Left cardiac atrium (tissue), 4 donors: ENCODE measurements at regions of chr20 and their contacts with region 1.

Region 1: DNA sequence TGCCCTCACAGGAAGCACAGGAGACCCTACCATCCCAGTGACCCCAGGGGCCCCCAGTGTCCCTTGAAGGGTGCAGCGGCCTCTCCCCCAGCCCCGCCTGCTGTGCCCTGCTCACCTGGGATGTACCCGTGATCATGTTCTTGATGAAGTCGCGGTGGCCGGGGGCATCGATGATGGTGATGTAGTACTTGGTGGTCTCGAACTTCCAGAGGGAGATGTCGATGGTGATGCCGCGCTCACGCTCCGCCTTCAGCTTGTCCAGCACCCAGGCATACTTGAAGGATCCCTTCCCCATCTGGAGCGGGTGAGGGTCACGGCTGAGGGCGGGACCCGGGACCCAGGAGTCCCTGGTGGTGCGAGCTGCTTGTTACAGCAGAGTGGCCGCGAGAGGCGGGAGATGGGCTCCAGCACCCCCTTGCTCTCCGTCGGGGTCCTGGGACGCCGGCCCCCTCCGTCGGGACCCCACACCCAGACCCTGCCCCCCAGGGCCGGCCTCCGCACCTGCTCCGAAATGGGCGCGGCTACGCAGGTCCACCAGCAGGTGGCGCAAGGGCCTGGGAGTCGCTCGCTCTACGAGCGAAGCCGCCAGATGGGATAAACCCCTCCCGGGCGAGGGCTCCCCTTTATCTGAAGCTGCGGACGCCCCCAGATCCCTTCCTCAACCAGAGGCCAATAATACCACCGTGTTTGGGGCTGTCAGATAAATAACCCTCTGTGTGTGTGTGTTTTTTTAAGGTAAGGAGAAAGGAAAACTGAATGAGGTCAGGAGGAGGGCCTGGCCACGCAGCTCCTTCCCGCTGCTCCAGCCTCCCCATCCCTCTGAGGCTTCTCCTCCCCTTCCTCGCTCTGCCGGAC is 2.9 kb downstream of the EEF1A2 start:
- DNase-seq: peak; percentile 75
- ATAC-seq: peak; percentile 30 to 47

Region 2: GRCh38 chr20:63520504-63520933 is 24.6 kb after region 1 on chr20 and contains the start of gene PPDPF:
- intact Hi-C with region 1: loop called in 1 of 2 experiments (anchors 1 kb)
- DNase-seq: peak; percentile 86
- ATAC-seq: peak; percentile 91 to 94
- total RNA-seq, gene PPDPF: 215 to 241 TPM